IMR-90 (cell line): ENCODE measurements at regions of chr12 and their contacts with region 1.

Region 1: GRCh38 chr12:95217377-95218149 is at the starts of genes FGD6 and VEZT:
- DNase-seq: peak; percentile 99
- ATAC-seq: peak; percentile 93
- H3K4me3 ChIP-seq: peak within 1 kb of the TSS; percentile 81
- H3K27ac ChIP-seq: peak within 1 kb of the TSS; percentile 77
- H3K4me1 ChIP-seq: 0 out of 2 replicates have a peak, but pooled peaks cover 2% of the 10 kb centered on the region
- H3K27me3 ChIP-seq: no peaks in the 10 kb centered on the region
- CTCF ChIP-seq: peak; percentile 87
- POLR2A ChIP-seq: peak; percentile 76; the same call in 1 of the 2 replicates
- RAD21 ChIP-seq: peak; percentile 81
- total RNA-seq, gene FGD6: 9.5 and 9.7 TPM in 2 replicates
- total RNA-seq, gene VEZT: 83.6 and 90.2 TPM in 2 replicates

Region 2: GRCh38 chr12:93785262-93786010 is 1432.1 kb before region 1 on chr12:
- CTCF ChIA-PET with region 1: no interaction called
- POLR2A ChIA-PET with region 1: interaction called, 16 read pairs
- dilution Hi-C with region 1: no loop called
- in situ Hi-C with region 1: no loop called
- intact Hi-C with region 1: no loop called
- DNase-seq: peak; percentile 97
- ATAC-seq: peak; percentile 88
- H3K4me3 ChIP-seq: no peak overlapping the region
- H3K27ac ChIP-seq: peak overlapping the region; percentile 90
- H3K4me1 ChIP-seq: peaks cover 30% of the 10 kb centered on the region
- H3K27me3 ChIP-seq: no peaks in the 10 kb centered on the region
- CTCF ChIP-seq: no peak
- POLR2A ChIP-seq: no peak
- RAD21 ChIP-seq: peak; percentile 24; the same call in 1 of the 2 replicates

Region 3: GRCh38 chr12:95072900-95073697 is 144.5 kb before region 1 on chr12 and contains the start of gene NR2C1:
- CTCF ChIA-PET with region 1: no interaction called
- POLR2A ChIA-PET with region 1: no interaction called
- dilution Hi-C with region 1: no loop called
- in situ Hi-C with region 1: no loop called
- intact Hi-C with region 1: loop called (anchors 2 kb)
- DNase-seq: peak; percentile 92
- ATAC-seq: peak; percentile 95
- H3K4me3 ChIP-seq: peak within 1 kb of the TSS; percentile 98
- H3K27ac ChIP-seq: peak within 1 kb of the TSS; percentile 97
- H3K4me1 ChIP-seq: no peaks in the 10 kb centered on the region
- H3K27me3 ChIP-seq: no peaks in the 10 kb centered on the region
- CTCF ChIP-seq: no peak; the same call in 1 of the 2 replicates
- POLR2A ChIP-seq: peak; percentile 39; the same call in 1 of the 2 replicates
- RAD21 ChIP-seq: no peak; the same call in 1 of the 2 replicates
- total RNA-seq, gene NR2C1: 12.7 and 17.2 TPM in 2 replicates

Region 4: DNA sequence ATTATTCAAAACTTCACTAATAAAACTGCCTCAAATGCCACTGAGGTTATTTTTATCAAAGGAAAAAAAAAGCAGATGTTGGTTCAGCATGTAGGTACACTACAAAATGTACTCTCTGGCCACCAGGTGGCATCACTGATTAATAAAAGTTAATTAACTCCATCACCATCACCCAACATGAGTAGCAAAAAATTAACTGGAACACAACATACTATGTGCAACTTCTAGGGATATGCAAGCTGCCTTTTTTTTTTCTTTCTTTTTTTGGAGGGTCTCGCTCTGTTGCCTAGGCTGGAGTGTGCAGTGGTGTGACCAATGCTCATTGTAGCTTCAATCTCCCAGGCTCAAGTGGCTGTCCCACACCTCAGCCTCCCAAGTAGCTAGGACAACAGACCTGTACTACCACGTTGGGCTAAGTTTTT is 100.4 kb before region 1 on chr12:
- CTCF ChIA-PET with region 1: interaction called, 12 read pairs
- POLR2A ChIA-PET with region 1: no interaction called
- dilution Hi-C with region 1: no loop called
- in situ Hi-C with region 1: no loop called
- intact Hi-C with region 1: loop called (anchors 1 kb)
- DNase-seq: peak; percentile 75
- ATAC-seq: peak; percentile 72
- H3K4me3 ChIP-seq: no peak overlapping the region
- H3K27ac ChIP-seq: no peak overlapping the region
- H3K4me1 ChIP-seq: peaks cover 15% of the 10 kb centered on the region
- H3K27me3 ChIP-seq: no peaks in the 10 kb centered on the region
- CTCF ChIP-seq: peak; percentile 78
- POLR2A ChIP-seq: no peak
- RAD21 ChIP-seq: peak; percentile 80

Region 5: GRCh38 chr12:95169368-95169767 is 48.2 kb before region 1 on chr12:
- CTCF ChIA-PET with region 1: no interaction called
- POLR2A ChIA-PET with region 1: no interaction called
- dilution Hi-C with region 1: no loop called
- in situ Hi-C with region 1: no loop called
- intact Hi-C with region 1: loop called (anchors 5 kb)
- DNase-seq: peak; percentile 92
- ATAC-seq: peak; percentile 90
- H3K4me3 ChIP-seq: no peak overlapping the region
- H3K27ac ChIP-seq: no peak overlapping the region
- H3K4me1 ChIP-seq: peaks cover 4% of the 10 kb centered on the region
- H3K27me3 ChIP-seq: no peaks in the 10 kb centered on the region
- CTCF ChIP-seq: no peak
- POLR2A ChIP-seq: no peak
- RAD21 ChIP-seq: 0 out of 2 replicates have a peak, but pooled peaks have one; percentile 6

Region 6: GRCh38 chr12:95277139-95277538 is 59.6 kb after region 1 on chr12:
- CTCF ChIA-PET with region 1: no interaction called
- POLR2A ChIA-PET with region 1: no interaction called
- dilution Hi-C with region 1: no loop called
- in situ Hi-C with region 1: no loop called
- intact Hi-C with region 1: no loop called
- DNase-seq: peak; percentile 97
- ATAC-seq: peak; percentile 97
- H3K4me3 ChIP-seq: no peak overlapping the region
- H3K27ac ChIP-seq: peak overlapping the region; percentile 40; the same call in 1 of the 2 replicates
- H3K4me1 ChIP-seq: peaks cover 5% of the 10 kb centered on the region; the same call in 1 of the 2 replicates
- H3K27me3 ChIP-seq: no peaks in the 10 kb centered on the region
- CTCF ChIP-seq: no peak
- POLR2A ChIP-seq: no peak
- RAD21 ChIP-seq: no peak

Region 7: DNA sequence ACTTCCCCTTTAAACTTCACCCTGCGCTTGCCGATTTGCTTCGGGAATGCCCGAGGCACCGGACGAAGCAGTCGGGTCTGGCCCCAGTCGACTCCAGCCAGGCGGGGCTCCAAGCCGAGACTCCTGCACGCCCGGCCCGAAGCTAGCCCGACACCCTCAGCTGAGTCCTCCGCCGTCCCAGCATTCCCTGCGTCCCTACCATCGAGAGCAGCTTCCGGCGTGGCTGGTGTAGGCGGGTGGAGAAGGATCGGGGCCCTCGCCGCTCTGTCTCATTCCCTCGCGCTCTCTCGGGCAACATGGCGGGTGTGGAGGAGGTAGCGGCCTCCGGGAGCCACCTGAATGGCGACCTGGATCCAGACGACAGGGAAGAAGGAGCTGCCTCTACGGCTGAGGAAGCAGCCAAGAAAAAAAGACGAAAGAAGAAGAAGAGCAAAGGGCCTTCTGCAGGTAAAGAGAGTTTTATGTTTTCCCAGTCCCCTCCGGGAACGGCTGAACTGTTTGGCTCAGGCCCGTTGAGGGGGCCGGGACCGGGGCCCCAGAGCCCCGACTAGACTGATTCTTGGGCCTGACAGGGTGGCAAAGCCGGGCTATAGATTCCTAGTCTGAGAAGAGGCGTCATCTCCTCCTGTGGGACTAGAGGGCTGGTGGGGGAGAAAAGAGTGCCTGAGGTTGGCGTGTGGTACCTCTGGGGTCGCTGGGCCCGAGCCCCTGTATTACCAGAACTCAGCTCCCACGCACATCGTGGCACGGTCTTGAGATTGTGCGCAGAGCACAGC is 256.5 kb after region 1 on chr12 and contains the start of gene METAP2:
- CTCF ChIA-PET with region 1: no interaction called
- POLR2A ChIA-PET with region 1: no interaction called
- dilution Hi-C with region 1: no loop called
- in situ Hi-C with region 1: no loop called
- intact Hi-C with region 1: loop called (anchors 1 kb)
- DNase-seq: peak; percentile 95
- ATAC-seq: peak; percentile 98
- H3K4me3 ChIP-seq: peak within 1 kb of the TSS; percentile 84
- H3K27ac ChIP-seq: peak within 1 kb of the TSS; percentile 89
- H3K4me1 ChIP-seq: no peaks in the 10 kb centered on the region
- H3K27me3 ChIP-seq: no peaks in the 10 kb centered on the region
- CTCF ChIP-seq: no peak
- POLR2A ChIP-seq: peak; percentile 98
- RAD21 ChIP-seq: no peak
- total RNA-seq, gene METAP2: 72.9 and 108 TPM in 2 replicates

Region 8: GRCh38 chr12:95532851-95533250 is 315.3 kb after region 1 on chr12:
- CTCF ChIA-PET with region 1: no interaction called
- POLR2A ChIA-PET with region 1: no interaction called
- dilution Hi-C with region 1: no loop called
- in situ Hi-C with region 1: no loop called
- intact Hi-C with region 1: loop called (anchors 1 kb)
- DNase-seq: peak; percentile 53
- ATAC-seq: no peak
- H3K4me3 ChIP-seq: no peak overlapping the region
- H3K27ac ChIP-seq: peak overlapping the region; percentile 55; the same call in 1 of the 2 replicates
- H3K4me1 ChIP-seq: peaks cover 15% of the 10 kb centered on the region
- H3K27me3 ChIP-seq: no peaks in the 10 kb centered on the region
- CTCF ChIP-seq: no peak
- POLR2A ChIP-seq: no peak
- RAD21 ChIP-seq: no peak